ENCODE measurements at regions of chr7 and their contacts with region 1.

Region 1: GRCh38 chr7:55477781-55478374 is 94.4 kb downstream of the VOPP1 start:
- DNase-seq: peak; percentile 96
- ATAC-seq: peak; percentile 89
- H3K4me3 ChIP-seq: no peak overlapping the region
- H3K27ac ChIP-seq: peak overlapping the region; percentile 45
- H3K4me1 ChIP-seq: peaks cover 30% of the 10 kb centered on the region
- H3K27me3 ChIP-seq: no peaks in the 10 kb centered on the region
- CTCF ChIP-seq: no peak
- POLR2A ChIP-seq: peak; percentile 17; the same call in 1 of the 2 replicates
- RAD21 ChIP-seq: no peak

Region 2: DNA sequence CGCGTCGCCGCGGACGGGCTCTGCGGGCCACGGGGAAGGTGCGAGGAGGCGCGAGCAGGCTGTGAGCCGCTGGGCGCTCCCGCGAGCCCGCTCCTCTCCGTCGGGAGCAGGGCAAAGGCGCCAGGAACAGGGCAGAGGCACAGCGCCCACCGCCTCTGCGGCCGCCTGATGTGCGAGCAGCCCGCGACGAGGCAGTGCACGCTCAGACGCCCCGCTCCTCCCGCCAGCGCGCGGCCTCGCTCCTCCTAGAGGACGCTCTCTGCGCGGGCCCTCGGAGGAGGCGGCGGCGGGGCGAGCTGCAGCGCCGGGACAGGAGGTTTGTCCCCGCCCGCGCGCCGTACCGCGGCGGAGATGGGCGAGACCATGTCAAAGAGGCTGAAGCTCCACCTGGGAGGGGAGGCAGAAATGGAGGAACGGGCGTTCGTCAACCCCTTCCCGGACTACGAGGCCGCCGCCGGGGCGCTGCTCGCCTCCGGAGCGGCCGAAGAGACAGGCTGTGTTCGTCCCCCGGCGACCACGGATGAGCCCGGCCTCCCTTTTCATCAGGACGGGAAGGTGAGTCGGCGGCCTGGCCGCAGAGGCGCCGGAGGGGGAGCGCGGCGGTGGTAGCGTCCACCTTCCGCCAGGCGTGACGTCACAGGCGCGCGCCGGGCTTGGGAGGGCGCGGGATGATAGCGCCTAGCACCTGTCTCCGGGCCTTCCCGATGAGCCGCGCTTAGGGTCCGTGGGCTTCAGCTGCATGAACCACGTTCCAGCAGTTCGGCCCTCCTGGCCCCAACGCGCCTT is 112.0 kb before region 1 on chr7:
- CTCF ChIA-PET with region 1: no interaction called
- POLR2A ChIA-PET with region 1: no interaction called
- dilution Hi-C with region 1: no loop called
- in situ Hi-C with region 1: no loop called
- intact Hi-C with region 1: loop called (anchors 5 kb)
- DNase-seq: peak; percentile 96
- ATAC-seq: peak; percentile 93
- H3K4me3 ChIP-seq: peak overlapping the region; percentile 91
- H3K27ac ChIP-seq: peak overlapping the region; percentile 96
- H3K4me1 ChIP-seq: peaks cover 7% of the 10 kb centered on the region
- H3K27me3 ChIP-seq: no peaks in the 10 kb centered on the region
- CTCF ChIP-seq: peak; percentile 32
- POLR2A ChIP-seq: peak; percentile 88
- RAD21 ChIP-seq: peak; percentile 7; the same call in 1 of the 2 replicates

Region 3: DNA sequence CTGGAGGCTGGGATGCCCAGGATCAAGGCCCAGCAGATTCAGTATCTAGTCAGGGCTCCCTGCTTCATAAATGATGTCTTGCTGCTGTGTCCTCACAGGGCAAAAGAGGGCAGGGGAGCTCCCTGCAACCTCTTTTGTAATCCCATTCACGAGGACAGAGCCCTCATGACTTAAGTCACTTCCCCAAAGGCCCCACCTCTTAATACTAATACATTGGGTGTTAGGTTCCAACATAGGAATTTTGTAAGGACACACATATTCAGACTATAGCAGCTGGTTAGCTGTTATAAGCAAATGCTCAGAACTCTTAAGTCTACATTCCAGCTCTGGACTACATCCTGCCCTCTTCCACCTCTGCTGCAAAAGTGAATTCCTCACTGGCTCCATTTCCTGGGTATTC is 31.4 kb after region 1 on chr7:
- CTCF ChIA-PET with region 1: no interaction called
- POLR2A ChIA-PET with region 1: no interaction called
- dilution Hi-C with region 1: no loop called
- in situ Hi-C with region 1: no loop called
- intact Hi-C with region 1: loop called (anchors 1 kb)
- DNase-seq: peak; percentile 83
- ATAC-seq: peak; percentile 86
- H3K4me3 ChIP-seq: no peak overlapping the region
- H3K27ac ChIP-seq: peak overlapping the region; percentile 36; the same call in 1 of the 2 replicates
- H3K4me1 ChIP-seq: peaks cover 20% of the 10 kb centered on the region
- H3K27me3 ChIP-seq: no peaks in the 10 kb centered on the region
- CTCF ChIP-seq: 0 out of 2 replicates have a peak, but pooled peaks have one; percentile 2
- POLR2A ChIP-seq: no peak
- RAD21 ChIP-seq: no peak

Region 4: DNA sequence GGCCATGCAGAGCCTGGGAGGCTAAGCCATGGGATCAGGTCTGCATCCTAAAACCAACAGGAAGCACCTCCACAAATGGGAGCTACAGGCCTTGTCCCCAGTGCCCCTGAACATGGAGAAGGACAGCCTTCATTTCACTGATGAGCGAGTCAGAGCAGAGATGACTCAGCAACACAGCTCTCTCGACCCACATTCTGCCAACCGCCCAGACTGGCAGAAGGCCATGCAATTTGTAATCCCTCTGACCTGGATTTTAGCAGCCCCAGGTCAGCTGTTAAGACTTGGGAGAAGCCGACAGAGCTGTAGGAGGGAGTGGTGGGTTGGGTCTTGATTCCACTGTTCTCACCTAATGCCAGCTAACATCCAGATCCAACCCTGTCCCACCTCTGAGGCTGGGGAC is 69.0 kb after region 1 on chr7:
- CTCF ChIA-PET with region 1: no interaction called
- POLR2A ChIA-PET with region 1: no interaction called
- dilution Hi-C with region 1: no loop called
- in situ Hi-C with region 1: no loop called
- intact Hi-C with region 1: loop called (anchors 5 kb)
- DNase-seq: peak; percentile 79
- ATAC-seq: peak; percentile 56
- H3K4me3 ChIP-seq: no peak overlapping the region
- H3K27ac ChIP-seq: 0 out of 2 replicates have a peak overlapping the region, but pooled peaks have one; percentile 5
- H3K4me1 ChIP-seq: peaks cover 19% of the 10 kb centered on the region
- H3K27me3 ChIP-seq: no peaks in the 10 kb centered on the region
- CTCF ChIP-seq: no peak
- POLR2A ChIP-seq: no peak
- RAD21 ChIP-seq: no peak

Measured in IMR-90 (cell line).